ENCODE measurements at regions of chr1 and their contacts with region 1.

Region 1: GRCh38 chr1:174912264-174912663 is 87.5 kb upstream of the CACYBP start:
- DNase-seq: peak; percentile 67
- ATAC-seq: peak; percentile 87
- H3K4me3 Mint-ChIP-seq: no peak overlapping the region
- H3K27ac Mint-ChIP-seq: peak overlapping the region; percentile 57
- H3K4me1 Mint-ChIP-seq: peaks cover 40% of the 10 kb centered on the region
- H3K27me3 Mint-ChIP-seq: no peaks in the 10 kb centered on the region
- CTCF ChIP-seq: no peak

Region 2: GRCh38 chr1:174800216-174800851 is 111.9 kb before region 1 on chr1:
- CTCF ChIA-PET with region 1: no interaction called
- POLR2A ChIA-PET with region 1: interaction called, 10 read pairs
- intact Hi-C with region 1: no loop called
- DNase-seq: peak; percentile 19
- ATAC-seq: no peak
- H3K4me3 Mint-ChIP-seq: no peak overlapping the region
- H3K27ac Mint-ChIP-seq: no peak overlapping the region
- H3K4me1 Mint-ChIP-seq: peaks cover 14% of the 10 kb centered on the region
- H3K27me3 Mint-ChIP-seq: no peaks in the 10 kb centered on the region
- CTCF ChIP-seq: no peak

Region 3: GRCh38 chr1:175043824-175044223 is 131.6 kb after region 1 on chr1:
- CTCF ChIA-PET with region 1: no interaction called
- POLR2A ChIA-PET with region 1: no interaction called
- intact Hi-C with region 1: no loop called
- DNase-seq: no peak
- ATAC-seq: no peak
- H3K4me3 Mint-ChIP-seq: no peak overlapping the region
- H3K27ac Mint-ChIP-seq: no peak overlapping the region
- H3K4me1 Mint-ChIP-seq: no peaks in the 10 kb centered on the region
- H3K27me3 Mint-ChIP-seq: peaks cover 9% of the 10 kb centered on the region
- CTCF ChIP-seq: no peak

Measured in activated CD8-positive, alpha-beta T cell treated with anti-CD3 and anti-CD28 coated beads for 36 hours (primary cell).